Dendritic cell treated with granulocyte-macrophage colony-stimulating factor and Interleukin-4, amounts not matched to agents 40 ng/mL and 50 ng/mL, for 4 days (primary cell): ENCODE measurements at regions of chr6 and their contacts with region 1.

Region 1: GRCh38 chr6:122749451-122750050 is 30.0 kb upstream of the FABP7 start:
- H3K4me3 Mint-ChIP-seq: no peak overlapping the region
- H3K27ac Mint-ChIP-seq: no peak overlapping the region
- H3K4me1 Mint-ChIP-seq: peaks cover 45% of the 10 kb centered on the region
- H3K27me3 Mint-ChIP-seq: no peaks in the 10 kb centered on the region

Region 2: DNA sequence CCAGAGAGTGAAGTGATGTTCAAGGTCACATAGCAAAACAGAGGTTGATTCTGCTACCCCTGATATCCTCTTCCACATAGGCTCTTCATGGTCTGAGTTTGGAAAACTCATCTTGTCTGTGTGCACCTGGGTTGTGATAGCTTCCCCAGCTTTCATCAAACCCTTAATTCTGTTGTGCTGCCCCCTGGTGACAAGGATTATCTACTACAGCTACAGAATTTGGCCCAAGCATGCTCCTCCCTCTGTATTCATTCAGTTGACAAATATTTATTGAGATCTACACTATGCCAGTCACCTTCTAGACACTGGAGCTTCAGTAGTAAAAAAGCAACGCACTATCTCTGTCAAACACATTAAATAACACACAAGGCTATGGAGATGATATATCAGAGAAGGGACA is 89.9 kb after region 1 on chr6:
- intact Hi-C with region 1: loop called (anchors 1 kb)
- H3K4me3 Mint-ChIP-seq: no peak overlapping the region
- H3K27ac Mint-ChIP-seq: no peak overlapping the region
- H3K4me1 Mint-ChIP-seq: no peaks in the 10 kb centered on the region
- H3K27me3 Mint-ChIP-seq: peaks cover 9% of the 10 kb centered on the region

Region 3: GRCh38 chr6:122995921-122996793 is 246.6 kb after region 1 on chr6 and contains the start of gene CLVS2:
- intact Hi-C with region 1: no loop called
- H3K4me3 Mint-ChIP-seq: no peak within 1 kb of the TSS
- H3K27ac Mint-ChIP-seq: no peak within 1 kb of the TSS
- H3K4me1 Mint-ChIP-seq: no peaks in the 10 kb centered on the region
- H3K27me3 Mint-ChIP-seq: peaks cover 48% of the 10 kb centered on the region